Natural killer cell (primary cell): ENCODE measurements at regions of chr5 and their contacts with region 1.

Region 1: DNA sequence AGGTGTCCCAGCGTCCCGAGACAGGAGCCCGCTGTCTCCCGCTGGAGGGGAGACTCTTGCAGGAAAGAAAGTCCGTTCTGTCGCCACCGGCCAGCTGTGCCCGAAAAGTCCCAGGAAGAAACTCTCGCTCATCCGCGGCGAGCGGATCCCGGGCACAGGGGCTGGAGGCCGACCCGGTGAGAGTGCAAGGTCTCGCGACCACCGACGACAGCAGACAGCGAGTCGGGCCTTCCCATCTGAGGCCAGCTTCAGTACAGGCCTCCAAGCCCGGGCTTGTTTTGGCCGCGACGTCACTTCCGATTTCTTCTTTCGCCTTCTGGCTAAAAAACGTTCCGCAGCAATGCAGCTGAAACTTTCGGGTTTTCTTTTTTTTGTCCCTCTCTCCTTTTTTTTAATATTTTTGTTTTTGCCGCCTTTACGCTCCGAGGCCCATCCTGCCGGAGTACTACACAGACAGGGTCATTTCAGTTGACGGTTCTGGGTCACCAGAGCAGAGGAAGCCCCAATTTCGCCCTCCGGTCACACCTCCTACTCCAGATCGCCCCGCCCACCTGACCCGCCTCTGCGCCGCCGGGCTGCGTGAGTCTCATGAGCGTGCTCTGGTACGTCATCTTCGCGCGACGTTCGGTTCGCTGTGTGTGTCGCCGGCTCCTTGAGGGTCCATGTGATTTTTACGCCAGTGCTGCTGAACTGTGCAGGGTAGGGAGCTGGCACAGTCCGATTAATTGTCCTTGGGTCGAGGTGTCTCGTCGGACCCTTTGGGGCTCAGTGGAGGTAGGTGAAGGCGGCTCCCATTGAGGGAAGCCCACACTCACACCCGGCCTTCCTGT is at the starts of genes ANKRA2 and UTP15:
- DNase-seq: peak; percentile 100
- ATAC-seq: peak; percentile 91 to 98 (median 93)
- H3K4me3 ChIP-seq: peak within 1 kb of the TSS; percentile 71
- H3K4me3 Mint-ChIP-seq: peak within 1 kb of the TSS; percentile 99
- H3K27ac ChIP-seq: peak within 1 kb of the TSS; percentile 95
- H3K27ac Mint-ChIP-seq: peak within 1 kb of the TSS; percentile 95 to 100
- H3K4me1 ChIP-seq: peaks cover 15% of the 10 kb centered on the region
- H3K4me1 Mint-ChIP-seq: peaks cover 38 to 40% of the 10 kb centered on the region in 2 donors
- H3K27me3 ChIP-seq: no peaks in the 10 kb centered on the region
- H3K27me3 Mint-ChIP-seq: no peaks in the 10 kb centered on the region
- CTCF ChIP-seq: no peak
- total RNA-seq, gene ANKRA2: 37.4 to 44.4 (median 41.9) TPM
- total RNA-seq, gene UTP15: 33.0 to 46.5 (median 40.9) TPM

Region 2: DNA sequence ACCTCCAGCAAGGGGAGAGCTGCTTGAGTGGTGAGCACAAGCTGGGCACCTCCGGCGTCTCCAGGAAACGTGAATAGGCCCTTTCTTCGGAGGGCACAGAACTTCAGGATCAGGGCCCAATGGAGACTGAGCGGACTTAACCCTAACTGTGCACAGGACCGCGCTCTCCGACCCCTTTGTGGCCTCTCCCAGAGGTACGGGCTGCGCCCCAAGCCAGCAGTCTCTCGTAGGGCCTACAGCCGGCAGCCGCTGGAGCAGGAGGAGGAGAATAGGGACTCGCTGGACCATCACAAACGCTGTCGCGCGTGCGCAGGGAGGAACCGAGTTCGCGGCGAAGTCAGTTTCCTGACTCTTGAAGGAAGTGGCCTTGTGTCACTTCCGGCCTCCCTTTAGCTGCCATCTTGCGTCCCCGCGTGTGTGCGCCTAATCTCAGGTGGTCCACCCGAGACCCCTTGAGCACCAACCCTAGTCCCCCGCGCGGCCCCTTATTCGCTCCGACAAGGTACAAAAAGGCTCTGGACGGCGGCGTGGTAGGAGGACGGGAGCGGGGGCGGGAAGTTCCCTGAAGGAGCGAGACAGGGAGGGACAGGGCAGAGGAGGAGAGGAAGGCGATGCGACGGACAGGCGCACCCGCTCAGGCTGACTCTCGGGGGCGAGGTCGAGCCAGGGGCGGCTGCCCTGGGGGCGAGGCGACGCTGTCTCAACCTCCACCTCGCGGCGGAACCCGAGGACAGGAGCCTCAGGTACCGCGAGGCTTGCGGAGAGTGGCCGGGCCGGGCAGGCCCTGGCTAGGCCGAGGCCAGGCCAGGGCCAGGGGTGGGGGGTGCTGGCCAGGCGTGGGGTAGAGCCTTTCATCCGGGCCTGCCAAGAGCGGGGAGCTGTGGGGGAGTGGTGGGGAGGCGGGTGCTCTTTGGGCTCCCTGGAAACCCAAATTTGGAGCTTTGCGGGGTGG is 67.0 kb before region 1 on chr5 and contains the start of gene BTF3:
- intact Hi-C with region 1: loop called (anchors 2 kb)
- DNase-seq: peak; percentile 87 to 97
- ATAC-seq: peak; percentile 90 to 94 (median 93)
- H3K4me3 ChIP-seq: peak within 1 kb of the TSS; percentile 100
- H3K4me3 Mint-ChIP-seq: peak within 1 kb of the TSS; percentile 95
- H3K27ac ChIP-seq: peak within 1 kb of the TSS; percentile 98
- H3K27ac Mint-ChIP-seq: peak within 1 kb of the TSS; percentile 94 to 98
- H3K4me1 ChIP-seq: peaks cover 13% of the 10 kb centered on the region
- H3K4me1 Mint-ChIP-seq: peaks cover 27 to 31% of the 10 kb centered on the region in 2 donors
- H3K27me3 ChIP-seq: peaks cover 9% of the 10 kb centered on the region
- H3K27me3 Mint-ChIP-seq: peaks cover 13 to 22% of the 10 kb centered on the region in 2 donors
- CTCF ChIP-seq: no peak
- total RNA-seq, gene BTF3: 364 to 423 (median 391) TPM

Region 3: DNA sequence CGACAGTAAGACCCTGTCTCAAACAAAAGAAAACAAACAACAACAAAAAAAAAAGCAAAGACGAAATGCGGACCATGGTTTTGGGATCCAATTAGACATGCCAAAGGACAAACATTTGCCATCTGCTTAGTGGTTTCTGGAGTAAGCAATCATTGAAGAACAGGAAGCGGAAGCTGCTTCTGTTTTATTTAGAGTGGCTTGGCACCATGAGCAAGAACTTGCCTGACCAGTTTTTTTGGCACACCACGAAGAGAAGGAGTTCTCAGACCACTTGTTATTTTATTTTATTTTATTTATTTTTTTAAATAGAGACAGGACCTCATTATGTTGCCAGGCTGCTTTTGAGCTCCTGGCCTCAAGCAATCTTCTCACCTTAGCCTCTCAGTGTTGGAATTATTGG is 50.1 kb before region 1 on chr5:
- intact Hi-C with region 1: no loop called
- DNase-seq: no peak
- ATAC-seq: no peak
- H3K4me3 ChIP-seq: no peak overlapping the region
- H3K4me3 Mint-ChIP-seq: no peak overlapping the region
- H3K27ac ChIP-seq: no peak overlapping the region
- H3K27ac Mint-ChIP-seq: no peak overlapping the region
- H3K4me1 ChIP-seq: peaks cover 5% of the 10 kb centered on the region
- H3K4me1 Mint-ChIP-seq: peaks cover 8 to 9% of the 10 kb centered on the region in 2 donors
- H3K27me3 ChIP-seq: no peaks in the 10 kb centered on the region
- H3K27me3 Mint-ChIP-seq: no peaks in the 10 kb centered on the region
- CTCF ChIP-seq: no peak

Region 4: DNA sequence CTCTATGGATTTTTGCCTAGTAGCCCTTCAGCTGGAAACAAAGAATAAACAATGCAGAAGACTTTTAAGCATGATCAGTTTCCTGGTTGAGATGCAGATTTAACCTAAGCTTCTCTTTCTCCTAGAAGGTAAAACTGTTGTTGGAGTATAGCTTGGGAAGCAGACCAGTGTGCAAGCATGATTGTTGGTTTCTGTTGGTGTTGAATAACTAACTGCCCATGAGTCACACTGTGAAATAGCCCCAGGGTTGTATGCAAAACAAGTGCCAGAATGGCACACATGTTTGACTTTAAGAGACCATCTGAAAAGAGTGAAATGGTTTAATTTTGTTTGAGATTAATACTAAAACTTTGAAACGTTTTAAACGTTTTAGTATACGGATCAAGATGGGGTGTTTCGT is 287.7 kb after region 1 on chr5:
- intact Hi-C with region 1: no loop called
- DNase-seq: no peak
- ATAC-seq: no peak
- H3K4me3 ChIP-seq: no peak overlapping the region
- H3K4me3 Mint-ChIP-seq: no peak overlapping the region
- H3K27ac ChIP-seq: no peak overlapping the region
- H3K27ac Mint-ChIP-seq: no peak overlapping the region
- H3K4me1 ChIP-seq: no peaks in the 10 kb centered on the region
- H3K4me1 Mint-ChIP-seq: no peaks in the 10 kb centered on the region
- H3K27me3 ChIP-seq: no peaks in the 10 kb centered on the region
- H3K27me3 Mint-ChIP-seq: no peaks in the 10 kb centered on the region
- CTCF ChIP-seq: no peak